ENCODE measurements at regions of chr14 and their contacts with region 1.

Region 1: DNA sequence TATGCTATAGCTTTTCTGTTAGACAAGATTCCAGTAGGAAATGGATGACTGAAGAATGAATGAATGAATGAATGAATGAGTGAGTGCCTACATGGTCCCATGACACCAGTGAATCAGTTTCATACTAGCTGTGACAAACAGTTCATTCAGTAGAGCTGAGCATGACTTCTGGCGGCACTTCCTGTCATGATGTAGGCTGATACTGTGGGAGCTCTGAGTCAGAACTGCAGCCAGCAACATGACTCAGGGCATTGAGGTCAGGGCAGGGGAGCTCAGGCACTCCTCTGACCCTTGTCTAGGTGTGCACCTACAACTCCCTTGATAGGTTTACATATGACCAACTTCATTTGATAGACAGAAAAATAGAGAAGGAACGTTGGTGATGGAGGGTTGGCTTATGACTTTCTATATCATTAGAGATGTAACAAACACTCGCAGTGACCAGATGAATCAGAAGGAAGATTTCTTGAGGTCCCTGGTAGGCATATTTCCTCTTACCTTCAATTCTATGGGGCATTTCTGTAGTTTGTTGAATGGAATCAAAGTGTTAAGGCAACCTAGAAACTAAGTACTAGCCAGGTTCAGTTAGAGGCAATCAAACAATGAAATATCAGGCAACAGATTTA is 139.3 kb upstream of the ARHGAP5 start:
- DNase-seq: no peak
- H3K4me3 ChIP-seq: no peak overlapping the region
- H3K27ac ChIP-seq: peak overlapping the region in 2 of 4 donors; percentile 42 to 50
- H3K4me1 ChIP-seq: peaks cover 0 to 14% (median 0%) of the 10 kb centered on the region in 3 donors
- H3K27me3 ChIP-seq: no peaks in the 10 kb centered on the region
- CTCF ChIP-seq: no peak
- POLR2A ChIP-seq: no peak

Region 2: GRCh38 chr14:32252030-32252670 is 314.3 kb after region 1 on chr14:
- intact Hi-C with region 1: loop called (anchors 10 kb)
- DNase-seq: no peak
- H3K4me3 ChIP-seq: no peak overlapping the region
- H3K27ac ChIP-seq: peak overlapping the region in 2 of 4 donors; percentile 23 to 69
- H3K4me1 ChIP-seq: peaks cover 0 to 25% (median 12%) of the 10 kb centered on the region in 3 donors
- H3K27me3 ChIP-seq: no peaks in the 10 kb centered on the region
- CTCF ChIP-seq: peak; percentile 52 to 89 (median 85)
- POLR2A ChIP-seq: no peak

Measured in esophagus squamous epithelium (tissue), 5 donors.